Caco-2 (cell line): ENCODE measurements at regions of chr6 and their contacts with region 1.

Region 1: DNA sequence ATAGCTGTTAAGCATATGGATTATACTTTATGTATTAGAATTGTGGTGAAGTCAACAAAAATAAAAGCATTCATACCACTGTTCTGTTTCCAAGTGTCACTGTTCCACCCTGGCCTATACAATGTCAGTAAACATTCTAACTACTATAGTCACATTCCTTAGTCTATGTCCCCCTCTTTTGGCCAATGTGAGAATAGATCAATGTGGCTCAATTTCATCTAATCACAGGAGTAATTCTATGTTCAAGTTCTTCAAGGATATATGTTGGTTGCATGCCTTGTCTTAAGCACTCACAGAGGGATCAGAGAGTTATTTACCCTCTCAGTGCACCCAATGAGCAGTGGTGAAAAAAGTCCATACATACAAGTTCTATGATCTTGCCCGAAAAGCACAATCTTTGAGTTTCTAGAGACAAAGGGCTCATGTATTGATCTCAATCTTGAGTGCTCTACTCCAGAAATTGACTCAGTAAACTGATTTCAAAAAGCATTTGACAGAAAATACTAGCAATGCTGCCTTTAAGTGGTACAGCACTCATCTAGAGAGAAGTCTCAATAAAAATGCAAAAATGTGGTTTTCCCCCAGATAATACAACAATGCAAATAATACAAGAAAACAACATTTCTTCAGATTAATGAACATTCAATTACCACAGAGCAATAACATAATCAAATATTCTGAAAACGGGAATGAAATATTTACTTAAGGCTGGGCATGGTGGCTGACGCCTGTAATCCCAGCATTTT is 16.5 kb downstream of the SMLR1 start:
- DNase-seq: peak in 1 of 2 experiments; percentile 54
- H3K4me3 ChIP-seq: no peak overlapping the region
- H3K4me3 Mint-ChIP-seq: no peak overlapping the region
- H3K27ac Mint-ChIP-seq: no peak overlapping the region
- H3K4me1 ChIP-seq: no peaks in the 10 kb centered on the region
- H3K4me1 Mint-ChIP-seq: no peaks in the 10 kb centered on the region
- H3K27me3 ChIP-seq: no peaks in the 10 kb centered on the region
- H3K27me3 Mint-ChIP-seq: no peaks in the 10 kb centered on the region
- CTCF ChIP-seq: peak; percentile 52 to 58

Region 2: GRCh38 chr6:130293800-130294199 is 549.9 kb before region 1 on chr6:
- CTCF ChIA-PET with region 1: no interaction called
- POLR2A ChIA-PET with region 1: interaction called, 7 read pairs
- intact Hi-C with region 1: loop called (anchors 10 kb)
- DNase-seq: peak; percentile 73 to 74
- H3K4me3 ChIP-seq: no peak overlapping the region
- H3K4me3 Mint-ChIP-seq: no peak overlapping the region
- H3K27ac Mint-ChIP-seq: peak overlapping the region; percentile 49
- H3K4me1 ChIP-seq: peaks cover 4% of the 10 kb centered on the region; the same call in 1 of the 2 replicates
- H3K4me1 Mint-ChIP-seq: peaks cover 6% of the 10 kb centered on the region
- H3K27me3 ChIP-seq: no peaks in the 10 kb centered on the region
- H3K27me3 Mint-ChIP-seq: no peaks in the 10 kb centered on the region
- CTCF ChIP-seq: peak; percentile 60 to 75

Region 3: DNA sequence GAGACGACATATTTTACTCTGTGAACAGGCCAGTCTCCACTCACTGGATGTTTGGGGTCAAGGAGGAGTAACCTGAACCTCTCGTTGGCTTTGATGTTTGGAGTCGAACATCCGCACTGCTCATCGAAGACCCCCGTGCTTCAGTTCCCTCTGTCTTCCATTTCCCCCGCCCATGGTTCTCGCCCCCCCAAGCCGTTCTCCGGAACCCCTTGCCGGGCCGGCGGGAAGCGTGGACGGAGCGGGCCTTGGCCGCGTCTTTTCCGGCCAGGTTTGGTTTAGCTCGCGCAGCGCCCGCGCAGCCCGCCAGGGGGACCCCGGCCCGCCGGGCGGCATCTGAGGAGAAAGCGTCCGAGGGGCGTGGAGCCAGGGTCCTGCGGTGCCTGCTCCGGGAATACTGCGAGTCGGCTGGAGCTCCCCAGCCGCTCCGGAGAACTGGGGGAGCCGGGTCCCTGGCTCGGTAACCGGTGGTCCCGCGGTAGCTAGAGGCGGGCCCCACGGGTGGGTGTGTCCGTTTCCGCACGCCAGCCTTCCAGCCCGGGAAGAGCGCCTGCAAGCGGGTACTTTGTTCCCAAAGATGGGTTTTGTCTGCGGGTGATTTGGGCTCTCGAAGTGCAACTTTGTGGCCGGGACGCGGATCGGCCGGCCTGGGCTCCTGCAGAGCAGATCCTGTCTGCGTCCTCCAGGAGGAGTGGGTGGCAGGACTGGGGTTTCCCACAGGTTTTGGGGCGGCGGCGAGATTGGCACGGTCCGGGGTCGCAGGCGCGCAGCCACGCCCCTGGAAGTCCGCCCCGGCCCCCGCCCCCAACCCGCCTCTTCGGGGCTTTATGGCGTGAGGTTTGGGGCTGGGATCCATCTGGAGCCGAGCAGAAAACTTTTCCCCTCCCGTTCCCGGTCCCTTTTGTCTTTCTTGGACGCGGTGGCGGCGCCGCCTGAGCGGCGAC is 478.3 kb before region 1 on chr6 and contains the start of gene TMEM200A:
- CTCF ChIA-PET with region 1: no interaction called
- POLR2A ChIA-PET with region 1: no interaction called
- intact Hi-C with region 1: loop called (anchors 1 kb)
- DNase-seq: peak; percentile 69 to 88
- H3K4me3 ChIP-seq: peak within 1 kb of the TSS; percentile 71
- H3K4me3 Mint-ChIP-seq: peak within 1 kb of the TSS; percentile 91
- H3K27ac Mint-ChIP-seq: peak within 1 kb of the TSS; percentile 20
- H3K4me1 ChIP-seq: peaks cover 16% of the 10 kb centered on the region
- H3K4me1 Mint-ChIP-seq: peaks cover 36% of the 10 kb centered on the region
- H3K27me3 ChIP-seq: no peaks in the 10 kb centered on the region
- H3K27me3 Mint-ChIP-seq: no peaks in the 10 kb centered on the region
- CTCF ChIP-seq: peak; percentile 76 to 92
- total RNA-seq, gene TMEM200A: 15.6 and 16.3 TPM in 2 replicates

Region 4: DNA sequence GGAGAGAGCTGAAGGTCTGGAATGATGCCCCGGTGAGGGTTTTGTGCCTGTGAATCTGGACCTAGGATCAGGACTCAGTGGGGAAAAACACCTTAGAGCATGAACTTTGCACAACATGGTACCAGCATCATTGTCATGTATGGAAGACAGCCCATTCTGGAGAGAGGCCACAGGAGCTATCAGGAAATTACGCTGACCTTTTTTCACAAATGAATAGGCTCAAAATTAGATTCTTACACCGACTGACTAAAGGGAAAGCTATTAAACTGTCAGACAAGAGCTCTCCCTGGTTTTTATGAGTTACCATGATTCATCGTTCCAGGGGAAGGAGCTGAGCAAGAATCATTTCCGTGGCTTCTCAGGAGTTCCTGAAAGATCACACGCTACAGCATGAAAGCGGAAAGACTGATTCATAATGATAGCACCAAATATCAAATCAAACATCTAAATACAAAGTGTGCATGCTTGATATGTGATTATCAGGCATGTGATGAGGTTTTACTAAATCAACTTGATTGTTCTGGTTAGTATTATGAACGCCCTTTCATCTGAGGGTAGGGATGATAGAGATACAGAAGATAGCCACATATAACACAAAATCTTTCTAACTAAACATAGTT is 241.5 kb before region 1 on chr6:
- CTCF ChIA-PET with region 1: no interaction called
- POLR2A ChIA-PET with region 1: no interaction called
- intact Hi-C with region 1: no loop called
- DNase-seq: no peak
- H3K4me3 ChIP-seq: no peak overlapping the region
- H3K4me3 Mint-ChIP-seq: no peak overlapping the region
- H3K27ac Mint-ChIP-seq: no peak overlapping the region
- H3K4me1 ChIP-seq: no peaks in the 10 kb centered on the region
- H3K4me1 Mint-ChIP-seq: no peaks in the 10 kb centered on the region
- H3K27me3 ChIP-seq: no peaks in the 10 kb centered on the region
- H3K27me3 Mint-ChIP-seq: no peaks in the 10 kb centered on the region
- CTCF ChIP-seq: no peak

Region 5: GRCh38 chr6:130760006-130760405 is 83.7 kb before region 1 on chr6:
- CTCF ChIA-PET with region 1: no interaction called
- POLR2A ChIA-PET with region 1: no interaction called
- intact Hi-C with region 1: loop called (anchors 2 kb)
- DNase-seq: peak in 1 of 2 experiments; percentile 48
- H3K4me3 ChIP-seq: no peak overlapping the region
- H3K4me3 Mint-ChIP-seq: no peak overlapping the region
- H3K27ac Mint-ChIP-seq: no peak overlapping the region
- H3K4me1 ChIP-seq: no peaks in the 10 kb centered on the region
- H3K4me1 Mint-ChIP-seq: no peaks in the 10 kb centered on the region
- H3K27me3 ChIP-seq: no peaks in the 10 kb centered on the region
- H3K27me3 Mint-ChIP-seq: no peaks in the 10 kb centered on the region
- CTCF ChIP-seq: peak; percentile 42 to 68

Region 6: GRCh38 chr6:130781557-130781956 is 62.2 kb before region 1 on chr6:
- CTCF ChIA-PET with region 1: no interaction called
- POLR2A ChIA-PET with region 1: no interaction called
- intact Hi-C with region 1: no loop called
- DNase-seq: no peak
- H3K4me3 ChIP-seq: no peak overlapping the region
- H3K4me3 Mint-ChIP-seq: no peak overlapping the region
- H3K27ac Mint-ChIP-seq: no peak overlapping the region
- H3K4me1 ChIP-seq: no peaks in the 10 kb centered on the region
- H3K4me1 Mint-ChIP-seq: no peaks in the 10 kb centered on the region
- H3K27me3 ChIP-seq: no peaks in the 10 kb centered on the region
- H3K27me3 Mint-ChIP-seq: no peaks in the 10 kb centered on the region
- CTCF ChIP-seq: no peak

Region 7: DNA sequence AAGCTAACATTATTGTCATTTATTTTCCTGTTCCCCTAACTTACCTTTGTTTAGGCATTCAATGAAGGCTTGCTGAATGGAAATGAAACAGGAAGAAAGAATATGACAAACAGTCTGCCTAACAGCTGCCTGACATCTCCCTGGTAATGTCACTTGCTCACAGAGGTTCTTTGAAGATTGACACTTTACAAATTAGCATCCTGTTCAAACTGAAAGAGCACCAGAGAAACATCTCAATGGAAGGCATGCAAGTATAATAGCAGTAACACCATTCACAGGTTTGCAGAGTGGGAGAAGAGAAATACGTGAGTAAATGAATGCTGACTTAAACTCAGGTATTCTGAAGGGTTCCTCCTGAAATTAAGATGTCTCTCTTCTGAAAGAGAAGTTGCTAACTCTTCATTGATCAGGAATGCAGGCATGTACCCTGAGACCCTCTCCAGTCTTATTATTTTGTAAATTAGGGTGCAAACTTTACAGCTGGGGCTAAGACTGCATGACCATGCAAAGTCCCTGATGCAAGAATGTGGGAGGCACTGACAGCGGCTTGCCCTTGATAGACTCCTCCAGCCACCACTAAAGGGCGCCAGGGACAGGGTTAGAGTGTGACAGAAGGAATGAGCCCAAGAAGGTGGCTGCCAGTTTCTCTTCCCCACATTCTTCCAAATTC is 17.8 kb before region 1 on chr6:
- CTCF ChIA-PET with region 1: interaction called, 3 read pairs
- POLR2A ChIA-PET with region 1: no interaction called
- intact Hi-C with region 1: loop called (anchors 1 kb)
- DNase-seq: no peak
- H3K4me3 ChIP-seq: no peak overlapping the region
- H3K4me3 Mint-ChIP-seq: peak overlapping the region; percentile 67
- H3K27ac Mint-ChIP-seq: peak overlapping the region; percentile 19
- H3K4me1 ChIP-seq: peaks cover 48% of the 10 kb centered on the region
- H3K4me1 Mint-ChIP-seq: peaks cover 36% of the 10 kb centered on the region
- H3K27me3 ChIP-seq: no peaks in the 10 kb centered on the region
- H3K27me3 Mint-ChIP-seq: no peaks in the 10 kb centered on the region
- CTCF ChIP-seq: no peak

Region 8: GRCh38 chr6:130885392-130886192 is 41.8 kb after region 1 on chr6:
- CTCF ChIA-PET with region 1: no interaction called
- POLR2A ChIA-PET with region 1: no interaction called
- intact Hi-C with region 1: no loop called
- DNase-seq: peak; percentile 79 to 82
- H3K4me3 ChIP-seq: no peak overlapping the region
- H3K4me3 Mint-ChIP-seq: no peak overlapping the region
- H3K27ac Mint-ChIP-seq: peak overlapping the region; percentile 23
- H3K4me1 ChIP-seq: no peaks in the 10 kb centered on the region
- H3K4me1 Mint-ChIP-seq: peaks cover 13% of the 10 kb centered on the region
- H3K27me3 ChIP-seq: no peaks in the 10 kb centered on the region
- H3K27me3 Mint-ChIP-seq: no peaks in the 10 kb centered on the region
- CTCF ChIP-seq: peak; percentile 81 to 87